Heart left ventricle (tissue), 16 donors: ENCODE measurements at regions of chr21 and their contacts with region 1.

Region 1: GRCh38 chr21:39062196-39062595 is 121.1 kb downstream of the PSMG1 start:
- DNase-seq: peak in 1 of 5 donors; percentile 44
- ATAC-seq: peak in 1 of 4 donors; percentile 17
- H3K4me3 ChIP-seq: no peak overlapping the region
- H3K27ac ChIP-seq: no peak overlapping the region
- H3K4me1 ChIP-seq: peaks cover 0 to 20% (median 13%) of the 10 kb centered on the region in 12 donors
- H3K27me3 ChIP-seq: no peaks in the 10 kb centered on the region
- CTCF ChIP-seq: no peak
- POLR2A ChIP-seq: no peak

Region 2: DNA sequence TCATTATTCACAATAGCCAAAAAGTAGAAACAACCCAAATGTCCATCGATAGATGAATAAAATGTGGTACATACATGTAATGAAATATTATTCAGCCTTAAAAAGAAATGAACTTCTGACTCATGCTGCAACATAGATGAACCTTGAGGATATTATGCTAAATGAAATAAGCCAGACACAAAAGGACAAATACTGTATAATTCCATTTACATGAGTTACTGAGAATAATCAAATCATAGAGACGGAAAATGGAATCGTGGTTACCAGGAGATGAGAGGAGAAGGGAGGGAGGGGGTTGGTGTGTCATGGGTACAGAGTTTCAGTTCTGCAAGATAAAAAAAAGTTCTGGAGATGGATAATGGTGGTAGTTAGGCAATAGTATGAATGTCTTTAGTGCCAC is 63.0 kb before region 1 on chr21:
- intact Hi-C with region 1: loop called in 1 of 10 experiments (anchors 5 kb)
- DNase-seq: no peak
- ATAC-seq: no peak
- H3K4me3 ChIP-seq: no peak overlapping the region
- H3K27ac ChIP-seq: peak overlapping the region in 2 of 12 donors; percentile 44 to 72
- H3K4me1 ChIP-seq: peaks cover 0 to 83% (median 60%) of the 10 kb centered on the region in 12 donors
- H3K27me3 ChIP-seq: no peaks in the 10 kb centered on the region
- CTCF ChIP-seq: no peak
- POLR2A ChIP-seq: no peak